ENCODE measurements at regions of chr14 and their contacts with region 1.

Region 1: DNA sequence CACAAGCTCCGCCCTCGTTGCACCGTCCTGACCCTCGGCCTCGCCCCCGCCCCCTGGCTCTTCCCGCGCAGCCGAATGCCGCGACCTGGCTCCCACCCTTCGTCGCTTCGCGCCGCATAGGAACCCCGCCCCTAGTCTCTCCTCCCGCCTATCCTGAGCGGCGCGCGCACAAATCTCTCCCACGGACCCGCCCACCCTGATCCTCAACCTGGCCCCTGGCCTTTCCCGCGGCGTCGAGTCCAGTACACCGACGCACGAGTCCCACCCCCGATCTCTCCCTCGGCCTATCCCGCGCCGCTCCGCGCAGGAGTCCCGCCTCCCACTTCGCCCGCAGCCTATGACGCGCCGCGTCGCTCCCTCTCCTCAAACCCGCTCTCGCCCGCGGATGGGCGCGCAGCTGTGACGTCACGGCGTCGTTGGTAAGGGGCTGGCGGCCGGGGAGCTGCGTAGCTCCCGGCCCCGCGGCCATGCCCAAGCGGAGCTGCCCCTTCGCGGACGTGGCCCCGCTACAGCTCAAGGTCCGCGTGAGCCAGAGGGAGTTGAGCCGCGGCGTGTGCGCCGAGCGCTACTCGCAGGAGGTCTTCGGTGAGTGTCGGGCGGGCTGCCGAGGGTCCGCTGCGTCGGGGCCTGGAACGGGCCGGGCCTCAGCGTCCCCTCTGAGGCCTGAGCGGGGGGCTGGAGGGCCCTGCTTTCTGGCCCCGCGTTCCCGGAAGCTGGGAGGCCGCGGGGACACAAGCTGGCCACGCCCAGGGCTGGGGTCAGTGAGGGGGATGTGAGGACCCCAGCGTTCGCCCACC is at the start of gene SIVA1:
- DNase-seq: peak; percentile 100
- H3K4me3 Mint-ChIP-seq: peak within 1 kb of the TSS; percentile 88
- H3K27ac Mint-ChIP-seq: peak within 1 kb of the TSS; percentile 89
- H3K4me1 Mint-ChIP-seq: peaks cover 22% of the 10 kb centered on the region
- H3K27me3 Mint-ChIP-seq: no peaks in the 10 kb centered on the region
- total RNA-seq, gene SIVA1: 96.0 and 104 TPM in 2 replicates

Region 2: GRCh38 chr14:104723648-104724406 is 29.1 kb before region 1 on chr14 and contains the start of gene ADSS1:
- intact Hi-C with region 1: loop called (anchors 2 kb)
- DNase-seq: peak; percentile 54
- H3K4me3 Mint-ChIP-seq: peak within 1 kb of the TSS; percentile 58
- H3K27ac Mint-ChIP-seq: no peak within 1 kb of the TSS
- H3K4me1 Mint-ChIP-seq: no peaks in the 10 kb centered on the region
- H3K27me3 Mint-ChIP-seq: no peaks in the 10 kb centered on the region
- total RNA-seq, gene ADSS1: 1.1 and 2.4 TPM in 2 replicates

Region 3: GRCh38 chr14:104768437-104769323 is 15.7 kb after region 1 on chr14:
- intact Hi-C with region 1: loop called (anchors 2 kb)
- DNase-seq: peak; percentile 84
- H3K4me3 Mint-ChIP-seq: no peak overlapping the region
- H3K27ac Mint-ChIP-seq: no peak overlapping the region
- H3K4me1 Mint-ChIP-seq: peaks cover 4% of the 10 kb centered on the region
- H3K27me3 Mint-ChIP-seq: no peaks in the 10 kb centered on the region

Region 4: GRCh38 chr14:104826189-104826860 is 73.4 kb after region 1 on chr14:
- intact Hi-C with region 1: loop called (anchors 5 kb)
- DNase-seq: peak; percentile 87
- H3K4me3 Mint-ChIP-seq: peak overlapping the region; percentile 81
- H3K27ac Mint-ChIP-seq: no peak overlapping the region
- H3K4me1 Mint-ChIP-seq: peaks cover 11% of the 10 kb centered on the region
- H3K27me3 Mint-ChIP-seq: peaks cover 29% of the 10 kb centered on the region

Region 5: DNA sequence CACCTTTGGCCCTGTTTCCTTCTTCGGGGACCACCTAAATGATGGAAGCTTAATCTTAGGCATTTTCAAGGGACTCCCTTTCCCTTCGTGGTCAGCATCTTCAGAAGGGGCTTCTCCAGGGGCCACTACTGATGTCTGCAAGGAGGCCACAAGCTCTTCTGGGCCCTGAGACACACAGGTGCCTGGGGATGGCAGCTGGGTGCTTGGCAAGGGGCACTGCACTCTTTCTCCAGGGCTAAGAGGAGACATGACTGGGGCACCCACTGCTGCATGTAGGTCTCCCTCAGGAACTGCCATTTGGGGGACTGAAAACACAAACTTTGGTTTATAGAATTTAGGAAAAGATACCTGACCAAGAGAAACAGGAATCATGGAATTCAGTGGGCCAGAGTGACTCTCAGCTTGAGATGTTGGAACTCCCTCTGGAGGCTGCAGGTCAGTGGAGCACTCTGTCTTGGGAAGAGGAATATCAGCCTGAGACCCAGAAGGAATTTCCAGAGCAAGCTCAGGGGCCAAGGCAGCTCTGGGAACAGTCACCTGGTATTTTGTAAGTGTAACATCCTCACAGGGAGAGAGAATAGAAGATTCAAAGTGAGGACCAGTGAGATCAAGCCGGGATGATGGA is 187.7 kb after region 1 on chr14:
- intact Hi-C with region 1: no loop called
- DNase-seq: no peak
- H3K4me3 Mint-ChIP-seq: no peak overlapping the region
- H3K27ac Mint-ChIP-seq: no peak overlapping the region
- H3K4me1 Mint-ChIP-seq: no peaks in the 10 kb centered on the region
- H3K27me3 Mint-ChIP-seq: peaks cover 10% of the 10 kb centered on the region